ENCODE measurements at regions of chr12 and their contacts with region 1.

Region 1: GRCh38 chr12:38906482-38907170 is 1.2 kb upstream of the CPNE8 start:
- DNase-seq: peak; percentile 78 to 88
- ATAC-seq: peak; percentile 77 to 87
- H3K4me3 ChIP-seq: peak overlapping the region; percentile 61
- H3K27ac ChIP-seq: peak overlapping the region; percentile 85 to 96
- H3K4me1 ChIP-seq: peaks cover 20% of the 10 kb centered on the region; the same call in 2 of the 3 replicates
- CTCF ChIP-seq: peak; percentile 83
- EP300 ChIP-seq: 0 out of 5 replicates have a peak, but pooled peaks of 1 of the 2 experiments have one; percentile 16
- POLR2A ChIP-seq: peak; percentile 28; the same call in 1 of the 2 replicates
- RAD21 ChIP-seq: peak; percentile 73 to 84

Region 2: DNA sequence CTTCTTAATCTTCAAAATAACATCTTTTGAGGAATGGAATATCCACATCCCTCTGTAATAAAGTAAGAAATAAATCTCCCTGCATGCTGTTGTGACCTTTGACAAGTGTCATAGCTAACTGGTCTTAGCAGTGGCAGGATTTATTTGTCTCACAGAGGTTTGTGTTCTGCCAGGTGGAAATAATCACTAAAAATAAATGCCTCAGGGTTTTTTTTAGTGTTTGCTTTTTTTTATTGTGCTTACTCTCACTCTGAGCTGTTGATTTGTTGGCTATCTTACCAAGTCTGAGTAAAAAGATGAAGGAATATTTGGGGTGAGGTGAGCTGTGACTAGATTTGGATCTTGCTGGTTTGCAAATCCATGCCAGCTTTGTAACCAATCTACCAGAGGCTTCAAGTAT is 304.7 kb before region 1 on chr12:
- CTCF ChIA-PET with region 1: no interaction called
- POLR2A ChIA-PET with region 1: no interaction called
- DNase-seq: no peak
- ATAC-seq: no peak
- H3K4me3 ChIP-seq: no peak overlapping the region
- H3K27ac ChIP-seq: no peak overlapping the region
- H3K4me1 ChIP-seq: no peaks in the 10 kb centered on the region
- CTCF ChIP-seq: no peak
- EP300 ChIP-seq: no peak
- POLR2A ChIP-seq: no peak
- RAD21 ChIP-seq: no peak

Region 3: DNA sequence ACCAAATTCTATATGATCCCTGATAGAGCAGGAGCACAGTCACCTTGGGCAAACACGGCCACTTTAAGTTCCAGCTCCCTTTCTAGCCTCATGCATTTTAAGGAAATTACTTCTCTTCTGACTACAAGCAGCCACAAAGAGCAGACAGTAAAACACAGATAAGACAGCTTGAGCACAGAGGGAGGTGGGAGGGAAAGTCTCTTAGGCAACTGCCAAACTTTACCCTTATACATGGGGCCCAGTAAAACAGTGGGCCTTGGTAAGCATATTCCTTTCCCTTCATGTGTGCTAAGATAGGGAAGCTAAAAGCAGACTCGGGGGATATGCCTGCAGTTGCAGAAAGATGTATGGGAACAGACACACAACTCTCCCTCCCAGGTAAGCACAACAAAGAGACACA is 237.1 kb before region 1 on chr12:
- CTCF ChIA-PET with region 1: interaction called, 15 read pairs
- POLR2A ChIA-PET with region 1: interaction called, 3 read pairs
- DNase-seq: no peak
- ATAC-seq: no peak
- H3K4me3 ChIP-seq: no peak overlapping the region
- H3K27ac ChIP-seq: no peak overlapping the region
- H3K4me1 ChIP-seq: no peaks in the 10 kb centered on the region
- CTCF ChIP-seq: no peak
- EP300 ChIP-seq: no peak
- POLR2A ChIP-seq: no peak
- RAD21 ChIP-seq: no peak

Region 4: GRCh38 chr12:38886064-38886463 is 20.6 kb before region 1 on chr12:
- CTCF ChIA-PET with region 1: interaction called, 15 read pairs
- POLR2A ChIA-PET with region 1: interaction called, 5 read pairs
- DNase-seq: peak in 1 of 2 experiments; percentile 76
- ATAC-seq: peak; percentile 72 to 76; a peak in 5 of 6 replicates
- H3K4me3 ChIP-seq: no peak overlapping the region
- H3K27ac ChIP-seq: no peak overlapping the region
- H3K4me1 ChIP-seq: peaks cover 32% of the 10 kb centered on the region
- CTCF ChIP-seq: no peak
- EP300 ChIP-seq: no peak
- POLR2A ChIP-seq: no peak
- RAD21 ChIP-seq: no peak

Region 5: DNA sequence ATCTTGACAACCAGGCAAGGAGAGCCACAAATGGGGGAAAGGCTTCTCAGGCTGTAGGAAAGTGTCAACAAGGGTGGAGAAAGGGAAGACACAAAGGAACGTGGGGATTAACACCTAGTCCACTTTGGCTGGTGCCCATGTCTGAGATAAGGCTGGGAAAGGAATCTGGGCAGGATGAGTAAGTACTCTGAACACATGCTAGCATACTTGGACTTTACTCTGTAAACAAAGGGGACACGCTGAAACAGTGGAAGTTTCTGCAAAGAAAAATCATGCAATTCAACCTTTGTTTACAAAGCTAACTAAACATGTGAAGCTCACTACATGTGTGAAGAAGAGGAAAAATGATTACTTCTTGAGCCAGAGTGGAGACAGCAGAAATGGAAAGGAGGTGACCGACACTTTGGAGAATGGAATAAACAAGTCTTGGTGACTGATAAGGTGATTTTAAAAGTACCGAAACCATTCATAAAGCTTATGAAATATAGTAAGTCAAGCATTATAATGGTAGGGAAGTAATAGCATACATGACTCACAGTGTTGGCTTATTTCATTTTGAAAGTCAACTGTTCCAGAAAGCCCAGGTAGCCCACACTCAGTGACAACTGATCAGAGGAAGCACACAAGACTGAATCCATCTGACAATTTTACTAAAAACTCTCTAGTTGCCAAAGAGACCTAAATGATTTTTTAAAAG is 14.4 kb before region 1 on chr12:
- CTCF ChIA-PET with region 1: interaction called, 15 read pairs
- POLR2A ChIA-PET with region 1: interaction called, 21 read pairs
- DNase-seq: peak; percentile 54 to 96
- ATAC-seq: peak; percentile 99 to 100
- H3K4me3 ChIP-seq: 0 out of 3 replicates have a peak overlapping the region, but pooled peaks have one; percentile 9
- H3K27ac ChIP-seq: peak overlapping the region; percentile 37 to 60; a peak in 5 of 6 replicates
- H3K4me1 ChIP-seq: peaks cover 39% of the 10 kb centered on the region
- CTCF ChIP-seq: no peak
- EP300 ChIP-seq: peak; percentile 43 to 47; a peak in 3 of 5 replicates
- POLR2A ChIP-seq: no peak
- RAD21 ChIP-seq: peak in 1 of 2 experiments; percentile 25; a peak in 2 of 5 replicates

Region 6: GRCh38 chr12:38921025-38921677 is 14.5 kb after region 1 on chr12:
- CTCF ChIA-PET with region 1: interaction called, 17 read pairs
- POLR2A ChIA-PET with region 1: no interaction called
- DNase-seq: peak; percentile 37 to 83
- ATAC-seq: peak; percentile 97
- H3K4me3 ChIP-seq: no peak overlapping the region
- H3K27ac ChIP-seq: no peak overlapping the region
- H3K4me1 ChIP-seq: no peaks in the 10 kb centered on the region
- CTCF ChIP-seq: peak; percentile 79
- EP300 ChIP-seq: no peak
- POLR2A ChIP-seq: no peak
- RAD21 ChIP-seq: peak; percentile 67 to 73

Region 7: DNA sequence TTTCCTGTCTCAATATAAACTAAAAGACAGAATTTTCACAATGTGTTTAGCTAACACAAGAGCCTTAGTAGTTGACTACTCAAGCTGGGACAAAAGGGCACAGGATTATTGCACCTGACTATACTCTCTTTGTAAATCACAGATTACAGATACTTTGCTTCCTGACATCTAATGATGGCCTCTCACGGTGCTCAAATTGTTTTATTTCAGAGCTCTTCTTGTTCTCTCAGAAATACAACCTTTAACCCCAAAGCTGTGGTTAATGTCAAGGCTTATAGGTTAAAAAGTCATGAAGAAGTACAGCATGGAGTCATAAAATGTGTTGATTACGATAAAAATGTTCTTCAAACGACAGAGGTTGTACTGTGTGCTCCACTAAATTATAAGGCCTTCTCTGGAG is 88.6 kb after region 1 on chr12:
- CTCF ChIA-PET with region 1: no interaction called
- POLR2A ChIA-PET with region 1: no interaction called
- DNase-seq: no peak
- ATAC-seq: no peak
- H3K4me3 ChIP-seq: no peak overlapping the region
- H3K27ac ChIP-seq: no peak overlapping the region
- H3K4me1 ChIP-seq: no peaks in the 10 kb centered on the region
- CTCF ChIP-seq: no peak
- EP300 ChIP-seq: no peak
- POLR2A ChIP-seq: no peak
- RAD21 ChIP-seq: no peak

Region 8: DNA sequence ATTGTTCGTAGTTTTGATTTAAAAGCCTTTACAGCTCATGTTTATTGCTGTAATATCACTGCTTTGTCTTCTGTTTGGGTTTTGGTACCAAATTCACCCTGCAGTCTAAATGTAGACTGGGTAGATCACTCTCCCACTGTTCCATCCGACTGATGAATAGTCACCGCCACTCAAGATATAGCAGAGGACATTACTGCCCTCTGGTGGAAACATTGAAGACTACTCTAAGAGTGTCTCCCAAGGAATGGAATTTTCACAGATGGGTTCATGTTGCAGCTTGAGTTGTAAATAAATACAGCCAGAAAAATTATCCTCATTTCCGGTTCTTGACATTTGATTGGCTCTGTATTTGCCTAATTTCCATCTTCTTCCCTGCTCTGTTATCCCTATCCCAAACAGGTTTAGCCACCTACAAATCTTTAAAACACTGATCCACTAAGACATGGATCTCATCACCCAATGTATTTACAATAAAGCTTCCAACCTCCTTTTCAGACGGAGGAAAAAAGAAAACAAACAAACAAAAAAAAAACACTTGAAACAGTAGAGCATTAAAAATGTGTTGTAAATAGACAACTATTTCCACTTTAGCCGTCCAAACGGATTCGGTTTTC is 197.0 kb after region 1 on chr12:
- CTCF ChIA-PET with region 1: interaction called, 17 read pairs
- POLR2A ChIA-PET with region 1: no interaction called
- DNase-seq: peak; percentile 64 to 75
- ATAC-seq: peak; percentile 96 to 99
- H3K4me3 ChIP-seq: no peak overlapping the region
- H3K27ac ChIP-seq: no peak overlapping the region
- H3K4me1 ChIP-seq: no peaks in the 10 kb centered on the region
- CTCF ChIP-seq: peak; percentile 80
- EP300 ChIP-seq: no peak
- POLR2A ChIP-seq: no peak
- RAD21 ChIP-seq: peak; percentile 77 to 89

Measured in A549 (cell line).